Activated naive CD8-positive, alpha-beta T cell treated with anti-CD3 and anti-CD28 coated beads, Interleukin-2, amount 10 ng/mL, durations not matched to agents 7 days and 5 days (primary cell): ENCODE measurements at regions of chr6 and their contacts with region 1.

Region 1: GRCh38 chr6:5995949-5996713 is 10.6 kb downstream of the NRN1 start:
- DNase-seq: peak; percentile 59
- ATAC-seq: peak; percentile 22
- H3K4me3 Mint-ChIP-seq: peak overlapping the region; percentile 91
- H3K27ac Mint-ChIP-seq: peak overlapping the region; percentile 84
- H3K4me1 Mint-ChIP-seq: peaks cover 56% of the 10 kb centered on the region
- H3K27me3 Mint-ChIP-seq: peaks cover 72% of the 10 kb centered on the region

Region 2: DNA sequence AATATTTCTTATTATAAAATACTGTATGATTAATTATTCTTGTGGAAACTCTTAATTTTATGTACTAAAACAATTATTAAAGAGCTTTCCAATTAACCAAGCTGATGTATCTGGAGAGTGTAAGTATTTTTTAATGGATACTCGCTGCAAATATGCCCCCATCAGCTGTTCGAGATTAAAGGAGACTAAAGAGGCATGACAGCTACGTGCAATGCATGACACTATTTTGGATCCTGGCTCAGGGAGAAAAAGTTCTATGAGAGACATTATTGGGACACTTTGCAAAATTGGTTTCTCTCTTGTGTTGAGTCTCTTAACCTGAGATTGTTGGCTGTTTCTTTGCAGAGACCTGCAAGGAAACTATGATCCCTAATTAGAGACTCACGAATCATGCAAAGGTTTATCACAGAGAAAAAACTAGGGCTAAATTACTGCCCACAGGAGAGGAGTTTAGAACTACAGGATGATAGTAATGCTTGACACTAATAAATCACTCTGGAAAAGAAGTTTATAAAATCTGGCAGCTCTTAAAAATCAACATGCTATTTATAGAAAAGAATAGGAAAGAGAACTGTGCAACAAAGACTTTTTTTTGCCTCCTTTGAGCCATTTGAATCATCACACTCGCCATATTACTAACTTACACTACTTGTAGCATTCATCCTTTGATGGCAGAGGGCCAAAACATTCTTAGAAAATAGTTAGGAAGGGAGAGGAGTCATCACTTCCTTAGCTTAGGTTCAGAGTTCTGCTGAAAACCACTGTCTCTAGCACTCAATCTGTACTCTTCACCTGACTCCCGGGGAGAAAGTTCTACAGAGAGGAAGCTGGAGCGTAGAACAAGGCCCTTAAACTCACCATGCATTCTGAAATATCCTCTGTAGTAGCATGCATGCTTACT is 14.8 kb before region 1 on chr6:
- POLR2A ChIA-PET with region 1: interaction called, 15 read pairs
- DNase-seq: no peak
- ATAC-seq: peak; percentile 66
- H3K4me3 Mint-ChIP-seq: peak overlapping the region; percentile 49
- H3K27ac Mint-ChIP-seq: peak overlapping the region; percentile 42
- H3K4me1 Mint-ChIP-seq: peaks cover 61% of the 10 kb centered on the region
- H3K27me3 Mint-ChIP-seq: no peaks in the 10 kb centered on the region

Region 3: DNA sequence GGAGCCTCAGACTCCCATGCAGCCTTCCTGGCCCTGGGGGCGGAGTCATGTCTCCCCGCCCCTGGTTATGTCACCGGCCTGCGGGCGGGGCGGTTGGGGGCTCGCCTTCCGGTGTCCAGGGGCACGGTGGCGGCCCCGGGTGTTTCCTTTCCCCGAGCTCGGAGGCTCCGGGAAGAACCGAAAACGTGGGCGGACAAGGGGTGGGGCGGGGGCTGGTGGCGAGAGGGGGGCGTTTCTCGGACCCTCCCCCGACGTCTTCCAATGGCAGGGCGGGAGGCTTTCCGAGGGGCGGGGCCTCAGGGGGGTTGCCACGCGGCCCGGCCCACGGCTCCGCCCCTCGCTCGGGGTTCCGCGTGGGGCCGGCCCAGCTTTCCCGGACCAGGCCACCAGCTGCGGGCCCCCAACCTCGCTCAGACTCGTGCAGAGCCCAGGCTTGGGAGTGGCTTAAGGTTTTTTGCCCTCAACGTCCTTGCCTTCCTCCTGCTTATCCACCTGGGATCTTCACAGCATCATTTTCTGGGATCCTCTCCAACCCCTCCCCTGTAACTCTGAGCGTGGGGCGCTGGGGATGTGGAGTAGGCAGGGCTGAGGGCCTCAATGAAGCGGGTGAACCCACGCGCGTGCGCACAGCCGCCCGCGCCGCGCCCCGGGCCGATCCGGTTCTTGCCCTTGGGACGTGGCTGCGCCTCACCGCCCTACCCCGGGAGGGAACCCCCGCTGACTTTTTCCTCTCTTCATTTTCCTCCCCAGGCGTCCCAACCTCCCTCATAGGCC is 12.7 kb after region 1 on chr6:
- POLR2A ChIA-PET with region 1: interaction called, 22 read pairs
- DNase-seq: peak; percentile 91
- ATAC-seq: peak; percentile 65
- H3K4me3 Mint-ChIP-seq: peak overlapping the region; percentile 91
- H3K27ac Mint-ChIP-seq: peak overlapping the region; percentile 94
- H3K4me1 Mint-ChIP-seq: peaks cover 40% of the 10 kb centered on the region
- H3K27me3 Mint-ChIP-seq: peaks cover 70% of the 10 kb centered on the region